ENCODE measurements at regions of chr5 and their contacts with region 1.

Region 1: GRCh38 chr5:56350598-56351170 is 117.6 kb upstream of the ANKRD55 start:
- DNase-seq: peak; percentile 92
- ATAC-seq: peak; percentile 95
- H3K4me3 ChIP-seq: no peak overlapping the region
- H3K27ac ChIP-seq: peak overlapping the region; percentile 44
- H3K4me1 ChIP-seq: peaks cover 72% of the 10 kb centered on the region
- H3K27me3 ChIP-seq: no peaks in the 10 kb centered on the region
- CTCF ChIP-seq: no peak
- EP300 ChIP-seq: peak in 1 of 2 experiments; percentile 90; a peak in 2 of 4 replicates
- POLR2A ChIP-seq: no peak
- RAD21 ChIP-seq: no peak

Region 2: DNA sequence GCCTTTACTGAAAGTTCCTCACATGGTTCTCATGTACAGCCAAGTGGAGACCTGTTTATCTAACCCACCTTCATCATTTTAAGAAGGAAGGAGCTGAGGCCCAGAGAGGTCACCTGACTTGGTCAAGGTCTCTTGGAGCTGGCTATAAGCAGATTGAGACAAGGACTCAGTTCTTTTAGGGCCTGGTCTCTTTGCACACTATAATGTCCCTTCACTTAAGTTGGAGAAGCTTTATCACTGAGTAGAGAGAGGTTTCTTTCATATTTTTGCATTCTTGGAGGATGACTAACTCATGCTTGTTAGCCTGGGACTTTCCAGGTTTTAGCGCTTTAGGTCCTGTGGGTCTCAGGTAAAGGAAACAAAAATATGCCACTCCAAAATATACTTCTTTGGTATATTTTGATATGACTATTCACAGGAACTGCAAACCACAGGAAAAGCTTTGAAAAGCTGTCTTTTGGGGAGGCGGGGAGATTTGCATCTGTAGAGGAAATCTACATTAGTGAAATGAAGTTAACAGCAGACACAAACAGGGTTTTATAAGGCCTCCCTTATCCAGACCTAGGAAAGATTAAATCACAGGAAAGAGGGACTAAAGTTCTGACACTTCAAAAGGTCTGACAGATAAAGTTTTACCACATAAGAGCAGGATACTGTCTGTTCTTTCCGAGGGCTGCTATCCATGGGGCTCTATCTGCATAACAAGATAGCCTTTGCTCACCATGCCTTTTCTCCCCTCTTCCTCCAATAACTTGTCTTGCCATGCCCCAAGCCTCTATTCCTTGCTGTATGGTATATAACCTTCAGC is 21.7 kb before region 1 on chr5:
- CTCF ChIA-PET with region 1: no interaction called
- POLR2A ChIA-PET with region 1: interaction called, 25 read pairs
- in situ Hi-C with region 1: no loop called
- intact Hi-C with region 1: no loop called
- DNase-seq: peak; percentile 83
- ATAC-seq: peak; percentile 80
- H3K4me3 ChIP-seq: peak overlapping the region in 1 of 3 experiments; percentile 20; a peak in 2 of 6 replicates
- H3K27ac ChIP-seq: peak overlapping the region; percentile 46
- H3K4me1 ChIP-seq: peaks cover 73% of the 10 kb centered on the region
- H3K27me3 ChIP-seq: no peaks in the 10 kb centered on the region
- CTCF ChIP-seq: no peak
- EP300 ChIP-seq: peak in 1 of 2 experiments; percentile 59; a peak in 2 of 4 replicates
- POLR2A ChIP-seq: no peak
- RAD21 ChIP-seq: no peak

Region 3: DNA sequence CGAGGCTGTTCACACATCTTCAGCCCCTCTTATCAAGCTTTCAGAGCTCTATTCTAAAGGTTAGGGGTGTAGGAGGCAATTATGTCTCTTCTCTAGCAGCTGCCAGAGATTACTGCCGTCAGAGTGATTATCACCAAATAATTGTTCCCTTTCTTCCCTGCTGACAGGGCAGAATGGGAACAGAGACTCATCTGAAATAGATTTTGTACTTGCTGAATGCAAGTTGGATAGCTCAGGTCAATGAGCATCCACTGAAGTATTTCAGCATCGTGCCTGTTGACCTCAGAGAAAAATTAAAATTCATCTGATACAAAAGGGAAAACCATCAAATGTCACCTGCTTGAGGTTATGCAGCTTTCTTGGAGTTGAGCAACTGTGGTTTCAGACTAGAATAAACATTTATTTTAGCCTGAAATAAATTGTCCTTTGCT is 251.0 kb after region 1 on chr5:
- CTCF ChIA-PET with region 1: no interaction called
- POLR2A ChIA-PET with region 1: no interaction called
- in situ Hi-C with region 1: no loop called
- intact Hi-C with region 1: no loop called
- DNase-seq: no peak
- ATAC-seq: no peak
- H3K4me3 ChIP-seq: no peak overlapping the region
- H3K27ac ChIP-seq: no peak overlapping the region
- H3K4me1 ChIP-seq: no peaks in the 10 kb centered on the region
- H3K27me3 ChIP-seq: peaks cover 0 to 18% of the 10 kb centered on the region in 2 experiments; a peak in 2 of 5 replicates
- CTCF ChIP-seq: no peak
- EP300 ChIP-seq: no peak
- POLR2A ChIP-seq: no peak
- RAD21 ChIP-seq: no peak